K562 (cell line): ENCODE measurements at regions of chr10 and their contacts with region 1.

Region 1: DNA sequence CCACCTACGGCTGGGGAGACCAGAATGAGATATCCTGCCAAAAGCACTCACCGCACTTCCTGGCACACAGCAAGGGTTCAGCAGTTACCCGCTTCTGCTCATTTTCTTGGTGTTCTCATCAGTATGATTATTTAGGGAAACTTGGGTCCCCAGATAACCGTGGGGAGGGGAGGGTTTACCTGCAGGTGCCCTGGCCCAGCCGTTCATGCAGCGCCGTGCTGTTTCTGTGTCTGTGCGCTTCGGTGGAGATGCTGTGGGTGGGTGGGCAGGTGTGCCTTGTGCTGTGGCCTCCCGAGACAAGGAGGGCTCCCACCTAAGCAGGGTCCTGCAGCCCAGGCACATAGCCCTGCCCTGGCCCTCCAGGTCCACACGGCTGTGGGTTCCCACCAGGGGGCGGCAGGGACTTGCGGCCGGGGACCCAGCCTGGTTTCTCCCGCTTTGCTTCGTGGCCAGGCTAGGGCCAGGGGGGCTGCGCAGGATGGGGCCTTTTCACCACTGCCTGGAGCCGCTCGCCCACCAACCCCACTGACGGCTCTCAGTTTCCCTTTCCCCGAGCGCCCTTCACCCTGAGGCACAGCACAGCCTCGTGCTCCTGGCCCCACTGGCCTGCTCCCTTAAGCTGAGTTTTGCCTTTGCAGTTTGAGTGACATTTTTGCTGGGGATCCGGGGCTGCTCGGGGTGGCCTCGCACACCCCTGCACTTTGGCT is 78.5 kb downstream of the LHPP start:
- DNase-seq: peak; percentile 61 to 79 (median 66)
- ATAC-seq: peak; percentile 96
- H3K4me3 ChIP-seq: no peak overlapping the region
- H3K27ac ChIP-seq: no peak overlapping the region
- H3K4me1 ChIP-seq: peaks cover 0 to 63% of the 10 kb centered on the region in 2 experiments; a peak in 2 of 5 replicates
- H3K27me3 ChIP-seq: peaks cover 0 to 17% of the 10 kb centered on the region in 2 experiments; a peak in 2 of 5 replicates
- CTCF ChIP-seq: peak; percentile 68 to 87 (median 74)
- EP300 ChIP-seq: no peak
- POLR2A ChIP-seq: no peak
- RAD21 ChIP-seq: peak; percentile 86 to 94

Region 2: GRCh38 chr10:124486635-124487034 is 53.5 kb before region 1 on chr10:
- CTCF ChIA-PET with region 1: no interaction called
- POLR2A ChIA-PET with region 1: no interaction called
- in situ Hi-C with region 1: no loop called
- intact Hi-C with region 1: no loop called
- DNase-seq: peak; percentile 74 to 85 (median 80)
- ATAC-seq: peak; percentile 94
- H3K4me3 ChIP-seq: no peak overlapping the region
- H3K27ac ChIP-seq: no peak overlapping the region; the same call in 2 of the 3 replicates
- H3K4me1 ChIP-seq: peaks cover 8 to 16% of the 10 kb centered on the region in 2 experiments; a peak in 4 of 5 replicates
- H3K27me3 ChIP-seq: no peaks in the 10 kb centered on the region
- CTCF ChIP-seq: no peak
- EP300 ChIP-seq: peak; percentile 75
- POLR2A ChIP-seq: no peak
- RAD21 ChIP-seq: no peak

Region 3: GRCh38 chr10:124522933-124523871 is 16.9 kb before region 1 on chr10:
- CTCF ChIA-PET with region 1: no interaction called
- POLR2A ChIA-PET with region 1: no interaction called
- in situ Hi-C with region 1: no loop called
- intact Hi-C with region 1: no loop called
- DNase-seq: no peak
- ATAC-seq: peak; percentile 34; the same call in 1 of the 3 replicates
- H3K4me3 ChIP-seq: no peak overlapping the region
- H3K27ac ChIP-seq: no peak overlapping the region
- H3K4me1 ChIP-seq: peaks cover 0 to 45% of the 10 kb centered on the region in 2 experiments; a peak in 2 of 5 replicates
- H3K27me3 ChIP-seq: peaks cover 0 to 6% of the 10 kb centered on the region in 2 experiments; a peak in 1 of 5 replicates
- CTCF ChIP-seq: no peak
- EP300 ChIP-seq: no peak
- POLR2A ChIP-seq: no peak
- RAD21 ChIP-seq: no peak

Region 4: GRCh38 chr10:124565565-124566256 is 25.6 kb after region 1 on chr10:
- CTCF ChIA-PET with region 1: interaction called, 3 read pairs
- POLR2A ChIA-PET with region 1: no interaction called
- in situ Hi-C with region 1: no loop called
- intact Hi-C with region 1: loop called (anchors 1 kb)
- DNase-seq: peak; percentile 58 to 69 (median 66)
- ATAC-seq: peak; percentile 94
- H3K4me3 ChIP-seq: no peak overlapping the region
- H3K27ac ChIP-seq: no peak overlapping the region
- H3K4me1 ChIP-seq: peaks cover 0 to 18% of the 10 kb centered on the region in 2 experiments; a peak in 4 of 5 replicates
- H3K27me3 ChIP-seq: peaks cover 0 to 13% of the 10 kb centered on the region in 2 experiments; a peak in 3 of 5 replicates
- CTCF ChIP-seq: peak; percentile 66 to 71 (median 68)
- EP300 ChIP-seq: no peak
- POLR2A ChIP-seq: no peak
- RAD21 ChIP-seq: peak; percentile 38 to 71; a peak in 3 of 4 replicates

Region 5: DNA sequence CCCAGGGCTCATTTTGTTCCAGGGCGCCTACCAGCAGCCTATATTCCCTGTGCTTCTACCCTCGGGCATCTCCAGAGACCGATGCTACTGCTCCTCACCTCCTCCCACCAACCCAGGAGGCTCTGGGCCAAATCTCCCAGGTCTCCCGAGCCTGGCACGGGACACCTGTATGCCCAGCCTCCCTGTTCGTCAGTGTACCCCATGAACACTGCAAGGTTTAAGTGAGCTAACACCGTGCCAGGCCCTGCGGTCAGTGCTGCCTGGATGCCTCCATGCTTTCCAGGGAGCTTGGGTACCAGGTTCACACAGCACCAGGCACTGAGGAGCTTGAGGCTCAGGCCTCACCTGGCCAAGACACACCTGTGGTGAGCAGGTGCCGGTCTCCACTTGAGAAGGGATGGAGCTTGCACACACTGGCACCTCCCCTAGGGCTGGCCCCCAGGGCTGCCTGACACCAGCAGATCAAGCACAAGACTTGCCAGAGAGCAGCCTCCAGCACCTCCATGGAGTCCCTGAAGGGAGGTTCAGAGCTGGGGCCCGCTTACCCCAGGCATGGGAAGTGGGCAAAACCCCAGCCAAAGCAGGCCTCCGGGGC is 123.8 kb after region 1 on chr10:
- CTCF ChIA-PET with region 1: no interaction called
- POLR2A ChIA-PET with region 1: no interaction called
- in situ Hi-C with region 1: no loop called
- intact Hi-C with region 1: no loop called
- DNase-seq: no peak
- ATAC-seq: no peak
- H3K4me3 ChIP-seq: no peak overlapping the region
- H3K27ac ChIP-seq: no peak overlapping the region
- H3K4me1 ChIP-seq: peaks cover 11 to 27% of the 10 kb centered on the region in 2 experiments
- H3K27me3 ChIP-seq: no peaks in the 10 kb centered on the region
- CTCF ChIP-seq: no peak
- EP300 ChIP-seq: no peak
- POLR2A ChIP-seq: no peak
- RAD21 ChIP-seq: no peak